PC-9 (cell line): ENCODE measurements at regions of chr11 and their contacts with region 1.

Region 1: GRCh38 chr11:3091791-3092602 is 34.8 kb upstream of the CARS1 start:
- DNase-seq: peak; percentile 66 to 72
- H3K4me3 ChIP-seq: no peak overlapping the region
- H3K27ac ChIP-seq: no peak overlapping the region
- H3K4me1 ChIP-seq: peaks cover 18% of the 10 kb centered on the region
- H3K27me3 ChIP-seq: no peaks in the 10 kb centered on the region
- CTCF ChIP-seq: peak; percentile 94

Region 2: GRCh38 chr11:1487851-1488547 is 1604.0 kb before region 1 on chr11:
- CTCF ChIA-PET with region 1: no interaction called
- POLR2A ChIA-PET with region 1: no interaction called
- intact Hi-C with region 1: no loop called
- DNase-seq: no peak
- H3K4me3 ChIP-seq: no peak overlapping the region
- H3K27ac ChIP-seq: no peak overlapping the region
- H3K4me1 ChIP-seq: no peaks in the 10 kb centered on the region
- H3K27me3 ChIP-seq: no peaks in the 10 kb centered on the region
- CTCF ChIP-seq: no peak

Region 3: GRCh38 chr11:3037040-3037944 is 54.7 kb before region 1 on chr11:
- CTCF ChIA-PET with region 1: interaction called, 7 read pairs
- POLR2A ChIA-PET with region 1: no interaction called
- intact Hi-C with region 1: loop called (anchors 1 kb)
- DNase-seq: peak in 1 of 2 experiments; percentile 61
- H3K4me3 ChIP-seq: no peak overlapping the region
- H3K27ac ChIP-seq: no peak overlapping the region
- H3K4me1 ChIP-seq: no peaks in the 10 kb centered on the region
- H3K27me3 ChIP-seq: no peaks in the 10 kb centered on the region
- CTCF ChIP-seq: peak; percentile 73

Region 4: GRCh38 chr11:3057069-3057963 is 34.7 kb before region 1 on chr11 and contains the start of gene CARS1:
- CTCF ChIA-PET with region 1: interaction called, 4 read pairs
- POLR2A ChIA-PET with region 1: no interaction called
- intact Hi-C with region 1: loop called (anchors 5 kb)
- DNase-seq: peak; percentile 84 to 89
- H3K4me3 ChIP-seq: peak within 1 kb of the TSS; percentile 70
- H3K27ac ChIP-seq: peak within 1 kb of the TSS; percentile 46; the same call in 1 of the 2 replicates
- H3K4me1 ChIP-seq: peaks cover 24% of the 10 kb centered on the region
- H3K27me3 ChIP-seq: no peaks in the 10 kb centered on the region
- CTCF ChIP-seq: no peak
- total RNA-seq, gene CARS1: 58.4 and 78.8 TPM in 2 replicates

Region 5: DNA sequence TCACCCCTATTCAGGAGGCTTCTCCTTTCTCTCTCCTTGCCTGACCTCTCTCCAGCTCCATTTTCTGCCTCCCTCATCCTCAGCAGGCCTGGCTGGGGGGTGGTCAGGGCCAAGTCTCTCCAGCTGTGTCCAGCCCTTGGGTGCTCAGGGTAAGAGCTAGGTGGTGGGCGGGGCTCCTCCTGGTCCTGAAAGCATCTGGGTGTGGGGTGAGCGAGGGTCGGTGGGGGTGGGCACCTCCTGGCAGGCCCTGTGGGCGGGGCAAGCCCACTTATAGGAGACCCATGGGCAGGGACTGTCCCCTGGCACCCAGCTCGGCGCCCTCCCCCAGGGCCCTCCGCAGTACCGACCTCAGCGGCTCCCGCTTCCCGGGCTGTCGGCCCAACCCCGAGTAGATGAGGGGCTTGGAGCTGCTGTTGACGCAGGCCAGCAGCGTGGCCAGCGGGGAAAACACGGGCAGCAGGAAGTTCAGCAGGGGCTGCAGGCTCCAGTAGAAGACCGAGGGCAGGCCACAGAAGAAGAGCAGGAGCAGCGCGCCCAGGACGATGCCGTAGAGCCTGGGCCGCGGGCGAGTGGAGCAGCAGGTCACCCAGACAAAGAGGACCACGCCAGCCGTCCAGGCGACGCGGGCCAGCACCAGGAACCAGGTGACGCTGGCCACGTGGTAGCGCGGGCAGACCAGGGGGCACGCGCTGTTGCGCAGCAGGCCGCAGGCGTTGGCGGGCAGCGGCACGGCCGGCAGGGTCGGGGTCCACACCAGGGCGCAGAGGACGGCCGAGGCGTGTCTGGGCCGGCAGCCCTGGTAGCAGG is 125.9 kb after region 1 on chr11:
- CTCF ChIA-PET with region 1: interaction called, 4 read pairs
- POLR2A ChIA-PET with region 1: no interaction called
- intact Hi-C with region 1: loop called (anchors 5 kb)
- DNase-seq: no peak
- H3K4me3 ChIP-seq: no peak overlapping the region
- H3K27ac ChIP-seq: no peak overlapping the region
- H3K4me1 ChIP-seq: no peaks in the 10 kb centered on the region
- H3K27me3 ChIP-seq: peaks cover 19% of the 10 kb centered on the region
- CTCF ChIP-seq: no peak